Mammary epithelial cell (primary cell): ENCODE measurements at regions of chr16 and their contacts with region 1.

Region 1: GRCh38 chr16:35239561-35239960 is 1780.1 kb downstream of the TP53TG3F start:
- DNase-seq: no peak
- H3K4me3 ChIP-seq: no peak overlapping the region
- H3K27ac ChIP-seq: no peak overlapping the region
- H3K4me1 ChIP-seq: no peaks in the 10 kb centered on the region
- H3K27me3 ChIP-seq: no peaks in the 10 kb centered on the region
- CTCF ChIP-seq: peak in 1 of 2 donors; percentile 36

Region 2: DNA sequence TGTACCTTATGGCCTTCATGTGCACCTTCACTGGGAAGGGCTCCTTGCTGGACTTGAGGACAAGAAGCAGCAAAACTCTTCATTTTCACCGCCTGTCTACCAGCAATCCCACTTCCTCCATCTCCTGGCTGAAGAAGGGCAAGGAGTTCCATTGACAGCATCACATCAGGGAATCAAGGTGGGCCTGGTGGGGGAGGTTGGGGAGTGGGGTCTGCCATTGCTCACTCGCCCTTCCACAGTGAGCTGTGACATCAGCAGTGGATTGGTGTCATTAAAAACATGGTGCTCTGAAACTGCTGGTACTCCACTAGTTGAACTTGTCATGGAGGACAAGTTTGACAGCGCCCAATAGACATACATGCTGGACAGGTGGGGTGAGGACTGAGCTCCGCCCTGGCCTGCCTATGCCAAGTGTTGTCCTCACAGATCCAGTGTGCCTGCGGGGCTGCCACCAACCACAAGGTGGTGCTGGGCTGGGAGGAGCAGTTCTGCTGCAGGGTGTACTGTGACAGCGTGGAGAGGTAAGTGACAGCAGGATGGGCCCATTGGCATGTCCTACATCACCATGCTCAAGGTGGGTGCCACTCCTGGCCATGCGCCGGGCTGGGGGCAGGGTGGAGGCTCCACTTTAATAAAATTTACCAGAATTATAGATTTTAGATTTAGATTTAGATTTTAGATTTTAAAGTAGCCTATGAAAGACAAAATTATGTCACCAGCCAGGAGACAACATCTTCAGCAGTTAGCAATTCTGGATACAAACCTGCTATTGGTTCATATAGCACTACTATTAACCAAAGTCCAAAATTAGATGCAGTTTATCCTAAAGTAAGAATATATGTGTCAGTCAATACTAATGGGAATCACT is 51.0 kb before region 1 on chr16:
- CTCF ChIA-PET with region 1: no interaction called
- dilution Hi-C with region 1: no loop called
- in situ Hi-C with region 1: loop called in 1 of 2 experiments (anchors 5 kb)
- intact Hi-C with region 1: loop called (anchors 1 kb)
- DNase-seq: no peak
- H3K4me3 ChIP-seq: no peak overlapping the region
- H3K27ac ChIP-seq: no peak overlapping the region
- H3K4me1 ChIP-seq: no peaks in the 10 kb centered on the region
- H3K27me3 ChIP-seq: no peaks in the 10 kb centered on the region
- CTCF ChIP-seq: peak; percentile 31 to 67